Naive thymus-derived CD4-positive, alpha-beta T cell (primary cell): ENCODE measurements at regions of chr1 and their contacts with region 1.

Region 1: GRCh38 chr1:218164111-218164929 is 120.8 kb upstream of the RRP15 start:
- DNase-seq: peak in 1 of 9 donors; percentile 27
- ATAC-seq: peak; percentile 18
- H3K4me3 ChIP-seq: peak overlapping the region; percentile 42
- H3K4me3 Mint-ChIP-seq: peak overlapping the region; percentile 77 to 88 (median 84)
- H3K27ac ChIP-seq: no peak overlapping the region
- H3K27ac Mint-ChIP-seq: peak overlapping the region in 1 of 9 donors; percentile 56
- H3K4me1 ChIP-seq: peaks cover 0 to 6% of the 10 kb centered on the region in 2 donors
- H3K4me1 Mint-ChIP-seq: peaks cover 9 to 20% (median 16%) of the 10 kb centered on the region in 7 donors
- H3K27me3 ChIP-seq: peaks cover 0 to 11% of the 10 kb centered on the region in 2 donors
- H3K27me3 Mint-ChIP-seq: peaks cover 32 to 69% (median 62%) of the 10 kb centered on the region in 5 donors

Region 2: GRCh38 chr1:217134857-217135568 is 1029.3 kb before region 1 on chr1:
- CTCF ChIA-PET with region 1: no interaction called
- POLR2A ChIA-PET with region 1: no interaction called
- intact Hi-C with region 1: loop called in 1 of 2 experiments (anchors 10 kb)
- DNase-seq: no peak
- ATAC-seq: no peak
- H3K4me3 ChIP-seq: no peak overlapping the region
- H3K4me3 Mint-ChIP-seq: peak overlapping the region in 1 of 10 donors; percentile 16
- H3K27ac ChIP-seq: no peak overlapping the region
- H3K27ac Mint-ChIP-seq: no peak overlapping the region
- H3K4me1 ChIP-seq: no peaks in the 10 kb centered on the region
- H3K4me1 Mint-ChIP-seq: peaks cover 0 to 11% (median 3%) of the 10 kb centered on the region in 7 donors
- H3K27me3 ChIP-seq: no peaks in the 10 kb centered on the region
- H3K27me3 Mint-ChIP-seq: peaks cover 59 to 81% (median 70%) of the 10 kb centered on the region in 5 donors